WTC11 (cell line): ENCODE measurements at regions of chr9 and their contacts with region 1.

Region 1: DNA sequence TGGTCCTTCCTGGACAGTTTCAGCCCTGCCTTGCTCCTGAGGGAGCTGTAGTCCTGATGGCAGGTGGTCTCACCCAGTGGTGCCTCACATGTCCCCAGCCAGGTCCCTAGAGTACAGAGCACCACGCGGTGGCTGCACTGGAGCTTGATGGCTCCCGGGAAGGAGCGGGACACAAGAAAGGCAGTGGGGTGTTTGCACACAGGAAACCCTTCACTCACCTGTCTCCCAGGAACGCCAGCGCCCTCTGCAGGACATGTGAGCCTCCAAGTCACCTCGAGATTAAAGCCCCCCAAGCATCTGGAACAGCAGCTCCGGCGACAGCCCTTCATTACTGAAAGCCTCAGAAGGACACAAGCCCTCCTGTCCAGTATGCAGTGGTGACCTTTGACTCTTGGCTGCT is 19.9 kb upstream of the TMEM250 start:
- DNase-seq: peak; percentile 94
- ATAC-seq: peak; percentile 64
- H3K4me3 Mint-ChIP-seq: no peak overlapping the region; the same call in 1 of the 2 replicates
- H3K27ac Mint-ChIP-seq: peak overlapping the region; percentile 94; the same call in 1 of the 2 replicates
- H3K4me1 Mint-ChIP-seq: peaks cover 17% of the 10 kb centered on the region
- H3K27me3 Mint-ChIP-seq: peaks cover 10% of the 10 kb centered on the region
- CTCF ChIP-seq: peak; percentile 72

Region 2: GRCh38 chr9:135961277-135961705 is 177.3 kb before region 1 on chr9 and contains the start of gene UBAC1:
- CTCF ChIA-PET with region 1: interaction called, 28 read pairs
- POLR2A ChIA-PET with region 1: interaction called, 3 read pairs
- DNase-seq: peak; percentile 94
- ATAC-seq: peak; percentile 85
- H3K4me3 Mint-ChIP-seq: peak within 1 kb of the TSS; percentile 85
- H3K27ac Mint-ChIP-seq: no peak within 1 kb of the TSS
- H3K4me1 Mint-ChIP-seq: peaks cover 21% of the 10 kb centered on the region
- H3K27me3 Mint-ChIP-seq: no peaks in the 10 kb centered on the region
- CTCF ChIP-seq: no peak
- total RNA-seq, gene UBAC1: 46.4 to 55.6 TPM (median 53.3 TPM) in 3 replicates

Region 3: DNA sequence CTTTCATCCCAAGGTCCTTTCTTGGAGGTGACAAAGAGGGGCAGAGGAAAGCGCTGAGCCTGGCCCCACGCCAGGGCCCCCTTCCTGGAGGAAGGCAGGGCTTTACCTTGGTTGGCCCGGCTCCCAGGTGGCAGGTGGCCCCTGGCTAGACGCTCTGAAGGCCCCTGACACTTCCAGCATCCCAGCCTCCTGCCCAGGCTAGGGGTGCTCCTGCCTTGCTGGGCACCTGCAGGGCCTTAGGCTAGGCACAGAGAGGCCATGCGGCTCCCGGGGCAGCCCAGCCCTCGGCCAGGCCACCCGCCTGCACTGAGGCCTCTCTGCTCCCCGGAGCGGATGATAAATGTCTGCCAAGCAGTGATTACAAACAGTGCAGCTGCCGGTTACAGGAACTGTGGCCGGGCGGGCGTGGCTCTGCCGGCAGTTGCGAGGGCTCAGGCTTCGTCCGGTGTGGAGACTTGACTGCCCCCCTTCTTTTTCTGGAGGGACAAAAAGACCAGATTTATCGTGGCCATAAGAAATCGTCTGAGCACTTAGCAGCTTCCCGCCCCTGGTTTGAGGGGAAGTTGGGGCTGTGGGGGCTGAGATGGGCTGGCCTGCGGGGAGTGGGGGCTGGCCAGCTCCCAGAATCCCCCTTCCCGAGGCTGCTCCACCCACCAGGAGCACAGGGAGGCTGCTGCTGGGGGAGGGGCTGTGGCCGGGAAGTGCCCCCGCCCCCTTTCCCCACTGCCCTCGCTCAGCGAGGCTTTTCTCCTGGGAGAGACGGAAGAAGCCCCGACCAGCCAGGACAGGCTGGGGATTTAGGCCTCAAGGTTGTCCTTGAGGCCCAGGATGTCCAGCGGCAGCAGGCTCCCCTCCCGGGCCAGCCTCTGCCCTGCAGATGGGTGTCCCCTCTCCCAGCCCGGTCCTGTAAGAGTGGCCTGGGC is 145.8 kb before region 1 on chr9:
- CTCF ChIA-PET with region 1: interaction called, 17 read pairs
- POLR2A ChIA-PET with region 1: no interaction called
- DNase-seq: peak; percentile 71
- ATAC-seq: peak; percentile 74
- H3K4me3 Mint-ChIP-seq: peak overlapping the region; percentile 53
- H3K27ac Mint-ChIP-seq: 0 out of 2 replicates have a peak overlapping the region, but pooled peaks have one; percentile 41
- H3K4me1 Mint-ChIP-seq: peaks cover 23% of the 10 kb centered on the region
- H3K27me3 Mint-ChIP-seq: no peaks in the 10 kb centered on the region
- CTCF ChIP-seq: no peak

Region 4: GRCh38 chr9:136196441-136197371 is 58.1 kb after region 1 on chr9:
- CTCF ChIA-PET with region 1: interaction called, 13 read pairs
- POLR2A ChIA-PET with region 1: no interaction called
- DNase-seq: no peak
- ATAC-seq: 0 out of 2 replicates have a peak, but pooled peaks have one; percentile 5
- H3K4me3 Mint-ChIP-seq: peak overlapping the region; percentile 58
- H3K27ac Mint-ChIP-seq: no peak overlapping the region
- H3K4me1 Mint-ChIP-seq: peaks cover 22% of the 10 kb centered on the region
- H3K27me3 Mint-ChIP-seq: peaks cover 97% of the 10 kb centered on the region
- CTCF ChIP-seq: no peak

Region 5: GRCh38 chr9:136267261-136268111 is 128.9 kb after region 1 on chr9:
- CTCF ChIA-PET with region 1: interaction called, 17 read pairs
- POLR2A ChIA-PET with region 1: interaction called, 3 read pairs
- DNase-seq: peak; percentile 84
- ATAC-seq: peak; percentile 91
- H3K4me3 Mint-ChIP-seq: peak overlapping the region; percentile 76
- H3K27ac Mint-ChIP-seq: peak overlapping the region; percentile 79
- H3K4me1 Mint-ChIP-seq: peaks cover 22% of the 10 kb centered on the region
- H3K27me3 Mint-ChIP-seq: no peaks in the 10 kb centered on the region; the same call in 1 of the 2 replicates
- CTCF ChIP-seq: no peak